Common myeloid progenitor, CD34-positive (primary cell): ENCODE measurements at regions of chr1 and their contacts with region 1.

Region 1: DNA sequence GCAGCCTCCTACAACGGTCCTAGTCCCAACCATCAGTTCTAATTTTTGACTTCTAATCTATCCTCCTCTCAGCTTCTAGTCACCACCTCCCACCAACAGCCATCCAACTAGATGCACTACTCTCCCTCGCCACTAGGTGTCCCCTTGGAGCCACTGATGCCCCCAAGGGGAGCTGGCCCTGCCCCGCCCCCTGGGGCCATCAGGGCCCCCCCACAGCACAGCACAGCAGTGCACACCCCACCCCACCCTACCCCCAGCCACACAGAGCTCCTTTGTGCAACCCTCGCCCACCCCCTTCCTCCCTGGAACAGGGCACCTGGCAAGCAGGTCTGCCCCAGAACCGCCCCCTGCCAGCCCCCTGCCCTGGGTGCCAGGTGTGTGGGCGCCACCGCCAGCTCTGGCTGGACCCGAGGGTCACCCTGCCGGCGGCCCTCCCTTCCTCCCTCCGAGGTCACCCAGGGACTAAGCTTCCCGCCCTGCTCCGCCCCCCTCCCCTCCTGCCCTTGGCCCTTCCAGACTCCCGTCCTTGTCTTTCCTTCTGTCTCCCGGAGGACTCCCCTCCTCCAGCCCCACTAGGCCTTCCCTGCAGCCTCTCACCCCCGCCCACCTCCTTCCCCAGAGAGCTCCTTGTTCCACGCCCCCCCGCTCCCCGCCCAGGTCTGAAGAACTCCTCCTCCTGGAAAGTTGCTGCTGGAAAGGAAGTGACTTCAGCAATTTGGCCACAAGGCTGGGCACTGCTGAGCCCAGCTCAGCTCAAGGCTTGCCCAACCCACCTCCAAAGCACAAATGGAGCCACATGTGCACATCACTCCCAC is 47.0 kb downstream of the AHDC1 start:
- DNase-seq: peak; percentile 67 to 86 (median 84)
- H3K4me3 ChIP-seq: no peak overlapping the region
- H3K27ac ChIP-seq: peak overlapping the region in 1 of 2 experiments; percentile 36
- H3K4me1 ChIP-seq: peaks cover 4 to 69% (median 58%) of the 10 kb centered on the region in 4 experiments
- H3K27me3 ChIP-seq: no peaks in the 10 kb centered on the region

Region 2: GRCh38 chr1:27525296-27526272 is 31.4 kb before region 1 on chr1:
- CTCF ChIA-PET with region 1: interaction called, 10 read pairs
- POLR2A ChIA-PET with region 1: interaction called, 7 read pairs
- DNase-seq: peak; percentile 52 to 80 (median 74)
- H3K4me3 ChIP-seq: peak overlapping the region; percentile 23 to 76 (median 67)
- H3K27ac ChIP-seq: peak overlapping the region; percentile 40 to 78
- H3K4me1 ChIP-seq: peaks cover 13 to 90% (median 86%) of the 10 kb centered on the region in 4 experiments
- H3K27me3 ChIP-seq: no peaks in the 10 kb centered on the region

Region 3: DNA sequence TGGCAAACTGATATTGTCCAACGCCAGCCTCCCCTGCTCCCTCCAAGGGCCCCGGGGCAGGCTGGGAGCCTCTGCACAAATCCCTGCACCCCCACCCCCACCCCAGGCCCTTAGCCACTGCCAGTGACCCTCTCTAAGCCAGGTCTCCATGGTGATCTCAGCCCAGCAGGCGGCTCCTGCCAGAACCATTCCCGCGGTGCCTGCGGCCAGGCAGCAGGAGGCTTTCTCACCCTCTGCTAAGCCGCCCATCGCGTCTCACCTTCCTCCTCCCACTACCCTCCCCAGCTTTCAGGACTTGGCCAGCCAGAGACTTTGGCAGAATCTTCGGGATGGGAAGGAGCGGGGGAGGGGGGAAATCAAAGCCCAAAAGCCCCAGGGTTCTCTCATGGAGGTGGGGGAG is 20.2 kb before region 1 on chr1:
- CTCF ChIA-PET with region 1: interaction called, 16 read pairs
- POLR2A ChIA-PET with region 1: no interaction called
- DNase-seq: no peak
- H3K4me3 ChIP-seq: no peak overlapping the region
- H3K27ac ChIP-seq: no peak overlapping the region
- H3K4me1 ChIP-seq: peaks cover 0 to 19% (median 5%) of the 10 kb centered on the region in 4 experiments
- H3K27me3 ChIP-seq: no peaks in the 10 kb centered on the region

Region 4: DNA sequence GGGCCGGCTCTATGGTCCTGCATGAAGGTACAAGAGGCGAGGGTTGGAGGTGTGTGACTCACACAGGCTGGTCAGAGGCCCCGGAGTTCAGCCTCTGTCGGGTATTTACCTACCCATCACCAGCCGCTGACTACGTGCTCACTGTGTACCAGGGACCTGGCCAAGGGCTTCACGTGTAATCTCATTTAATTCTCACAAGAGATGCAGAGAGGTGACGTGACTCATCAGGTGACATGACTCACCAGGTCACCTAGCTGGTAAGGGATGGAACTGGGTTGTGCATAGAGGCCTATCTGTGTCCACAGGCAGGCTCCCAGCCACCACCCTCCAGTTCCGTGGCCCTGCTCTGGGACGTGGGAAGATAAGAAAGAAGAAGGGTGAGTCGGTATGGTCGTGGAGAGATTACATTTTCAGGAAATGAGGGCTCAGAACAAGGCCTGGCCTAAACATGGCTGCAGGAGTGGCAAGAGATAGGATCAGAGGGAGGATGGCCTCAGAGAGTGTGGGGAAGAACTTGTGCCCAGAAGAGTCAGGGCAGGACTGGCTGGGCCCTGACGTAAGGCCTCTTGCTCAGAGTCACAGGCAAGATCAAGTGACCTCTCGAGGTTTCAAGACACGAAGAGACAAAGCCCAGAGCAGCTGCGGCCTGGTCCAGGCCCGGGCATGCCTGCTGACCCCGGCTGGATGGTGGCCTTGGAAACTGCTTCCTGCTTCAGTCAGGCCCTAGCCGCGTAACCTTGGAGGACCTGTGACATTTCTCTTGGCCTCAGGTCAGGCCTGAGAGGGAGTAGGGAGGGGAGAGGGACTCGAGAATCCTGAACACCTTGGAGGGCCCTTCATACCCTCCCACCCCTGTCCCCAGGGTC is 14.3 kb before region 1 on chr1:
- CTCF ChIA-PET with region 1: interaction called, 21 read pairs
- POLR2A ChIA-PET with region 1: no interaction called
- DNase-seq: peak; percentile 78 to 91 (median 82)
- H3K4me3 ChIP-seq: no peak overlapping the region
- H3K27ac ChIP-seq: peak overlapping the region in 1 of 2 experiments; percentile 81
- H3K4me1 ChIP-seq: peaks cover 0 to 17% (median 8%) of the 10 kb centered on the region in 4 experiments
- H3K27me3 ChIP-seq: no peaks in the 10 kb centered on the region

Region 5: DNA sequence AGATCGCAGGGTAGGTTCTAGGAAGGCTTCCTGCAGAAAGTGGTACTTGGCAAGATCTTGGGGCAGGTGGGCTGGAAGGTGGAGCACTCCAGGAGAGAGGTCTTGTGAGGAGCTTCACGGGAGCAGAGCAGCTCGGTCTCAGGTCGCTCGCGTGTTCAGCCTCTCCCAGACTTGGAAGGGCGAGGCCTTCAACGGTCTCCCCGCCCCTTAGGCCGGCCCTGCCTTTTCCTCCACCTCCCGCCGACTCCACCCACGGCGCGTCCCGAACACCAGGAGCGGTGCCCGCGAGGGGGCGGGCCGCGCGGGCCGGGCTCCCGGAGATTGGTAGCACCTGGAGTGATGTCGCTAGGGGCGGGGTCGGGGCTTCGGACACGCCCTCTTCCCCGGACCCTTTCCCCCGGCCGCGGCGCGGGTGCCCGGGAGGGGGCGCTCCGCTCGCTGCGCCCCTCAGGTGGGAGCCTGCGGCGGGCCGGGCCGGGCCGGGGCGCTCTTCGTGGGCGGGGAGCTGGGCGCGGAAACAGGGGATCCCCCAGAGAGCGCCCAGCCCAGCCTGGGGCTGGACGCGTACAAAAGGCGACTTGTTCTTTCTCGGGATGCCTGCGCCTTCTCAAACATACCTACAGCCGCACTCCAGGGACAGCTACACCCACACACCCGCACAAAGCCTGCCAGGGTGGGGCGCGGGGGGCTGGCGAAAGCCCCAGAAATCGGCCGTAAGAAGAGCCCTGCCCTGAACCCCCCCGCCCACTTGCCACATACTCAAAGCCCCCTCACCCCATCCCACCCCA is 11.5 kb after region 1 on chr1:
- CTCF ChIA-PET with region 1: interaction called, 142 read pairs
- POLR2A ChIA-PET with region 1: interaction called, 3 read pairs
- DNase-seq: peak; percentile 93 to 95 (median 94)
- H3K4me3 ChIP-seq: peak overlapping the region in 5 of 7 experiments; percentile 27 to 70 (median 36)
- H3K27ac ChIP-seq: peak overlapping the region in 1 of 2 experiments; percentile 56
- H3K4me1 ChIP-seq: peaks cover 3 to 98% (median 76%) of the 10 kb centered on the region in 4 experiments
- H3K27me3 ChIP-seq: no peaks in the 10 kb centered on the region